ENCODE measurements at regions of chr7 and their contacts with region 1.

Region 1: DNA sequence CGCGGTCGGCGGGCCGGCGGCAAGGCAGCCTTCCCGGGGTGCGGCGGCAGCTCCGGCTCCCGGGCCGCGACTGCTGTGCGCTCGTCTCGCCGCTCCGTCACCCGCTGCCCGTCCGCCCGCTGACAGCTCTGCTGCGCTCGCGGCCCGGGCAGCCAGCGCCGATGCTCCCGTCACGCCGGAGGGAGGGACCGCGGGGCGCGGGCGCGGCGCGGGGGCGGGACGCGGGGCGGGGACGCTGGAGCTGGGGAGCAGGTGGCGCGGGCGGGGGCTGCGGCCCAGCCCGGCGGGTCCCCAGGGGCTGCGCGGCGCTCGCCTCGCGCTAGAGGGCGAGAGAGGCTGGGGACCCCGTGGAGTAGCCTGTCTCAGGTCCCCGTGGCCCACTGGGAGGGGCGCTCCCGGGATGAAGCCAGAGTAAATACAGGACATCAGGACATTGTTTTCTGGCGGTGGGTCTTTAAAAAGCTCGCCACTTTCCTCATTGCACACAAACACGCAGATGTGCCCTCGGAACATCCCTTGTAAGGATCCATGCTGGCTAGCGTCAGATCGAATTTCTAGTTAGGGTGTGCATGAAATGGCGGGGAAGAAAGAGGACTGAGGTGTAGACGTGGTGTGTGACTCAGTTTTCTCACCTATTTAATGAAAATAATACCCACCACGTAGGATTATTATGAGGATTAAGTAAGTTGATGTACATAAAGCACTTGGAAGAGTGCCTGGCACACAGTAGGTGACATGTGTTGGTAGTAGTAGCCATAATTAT is at the start of gene ELAPOR2:
- DNase-seq: no peak
- H3K4me3 ChIP-seq: peak within 1 kb of the TSS; percentile 71 to 80 (median 77)
- H3K27ac ChIP-seq: peak within 1 kb of the TSS; percentile 74 to 79 (median 78)
- H3K4me1 ChIP-seq: peaks cover 12 to 24% (median 14%) of the 10 kb centered on the region in 4 donors
- H3K27me3 ChIP-seq: no peaks in the 10 kb centered on the region
- CTCF ChIP-seq: peak; percentile 45 to 60 (median 60)
- EP300 ChIP-seq: no peak
- POLR2A ChIP-seq: no peak
- total RNA-seq, gene ELAPOR2: 17.7 to 20.7 (median 19.8) TPM

Region 2: DNA sequence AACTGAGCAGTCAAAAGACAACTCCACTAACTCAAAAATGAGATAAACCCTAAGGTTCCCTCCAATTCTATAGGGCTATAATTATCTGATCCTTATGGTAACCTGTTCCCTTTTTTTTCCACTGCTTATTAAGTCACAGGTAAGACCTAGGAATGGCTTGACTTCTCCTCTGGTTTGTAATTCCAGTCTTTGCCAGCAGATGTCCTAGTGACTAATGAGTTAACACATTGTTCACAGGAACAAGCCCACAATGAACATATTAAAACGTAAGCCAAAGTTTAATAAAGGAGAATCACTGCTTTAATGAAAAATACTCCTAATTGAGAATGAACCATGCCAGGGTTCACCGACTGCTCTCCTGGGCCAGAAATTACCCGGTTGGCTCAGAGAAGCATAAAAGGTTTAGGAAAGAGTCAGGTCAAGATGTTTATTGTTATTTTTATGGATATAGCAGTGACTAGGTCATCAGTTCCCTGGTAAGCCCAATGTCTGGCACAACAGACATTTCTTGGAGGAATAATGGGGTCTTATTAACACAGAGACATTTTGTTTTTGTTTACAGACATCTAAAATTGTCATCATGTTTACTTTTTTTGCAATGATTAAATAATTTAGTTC is 120.4 kb before region 1 on chr7:
- intact Hi-C with region 1: loop called (anchors 5 kb)
- DNase-seq: no peak
- H3K4me3 ChIP-seq: no peak overlapping the region
- H3K27ac ChIP-seq: no peak overlapping the region
- H3K4me1 ChIP-seq: peaks cover 0 to 5% (median 4%) of the 10 kb centered on the region in 4 donors
- H3K27me3 ChIP-seq: no peaks in the 10 kb centered on the region
- CTCF ChIP-seq: peak; percentile 59 to 78 (median 75)
- EP300 ChIP-seq: no peak
- POLR2A ChIP-seq: no peak

Measured in esophagus muscularis mucosa (tissue), 4 donors.